T-cell (primary cell): ENCODE measurements at regions of chr12 and their contacts with region 1.

Region 1: DNA sequence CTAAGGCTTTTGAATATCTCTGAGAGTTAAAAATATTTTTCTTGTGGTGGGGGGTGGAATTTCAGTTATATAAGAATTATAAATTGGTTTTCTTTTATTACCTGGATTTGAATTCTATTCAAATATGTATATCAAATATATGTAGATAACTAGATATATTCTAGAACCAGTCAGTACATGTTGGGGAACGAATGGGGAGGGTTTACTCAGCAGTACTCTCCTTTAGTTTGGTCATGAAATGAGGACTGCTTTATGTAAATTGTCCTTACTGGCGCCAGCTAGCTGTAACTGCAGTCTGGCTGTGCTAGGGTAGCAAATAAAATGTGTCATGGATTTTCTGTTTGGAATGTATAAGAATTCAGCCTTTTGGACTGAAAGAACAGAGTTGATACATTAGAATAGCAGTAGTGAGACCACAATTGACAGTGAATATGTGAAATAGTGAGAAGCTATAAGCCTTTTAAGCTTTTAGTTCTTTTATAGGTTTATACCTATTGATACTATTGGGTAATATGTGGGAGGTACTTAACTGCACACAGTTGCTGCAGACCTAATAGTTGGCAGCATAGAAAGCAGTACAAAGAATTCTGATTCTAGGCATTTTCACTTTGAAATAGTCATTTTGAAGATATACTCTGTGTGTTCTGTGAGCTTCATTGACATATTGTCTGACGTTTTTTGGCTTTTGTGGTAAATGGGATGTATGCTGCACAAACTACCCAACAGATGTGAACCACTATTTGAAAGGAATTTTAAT is 29.0 kb downstream of the ATF7IP start:
- DNase-seq: peak in 21 of 35 experiments; percentile 13 to 81 (median 31)
- ATAC-seq: peak; percentile 65 to 81 (median 76)
- H3K4me3 ChIP-seq: peak overlapping the region in 1 of 2 donors; percentile 16
- H3K4me3 Mint-ChIP-seq: peak overlapping the region; percentile 58 to 82 (median 73)
- H3K27ac ChIP-seq: peak overlapping the region; percentile 73
- H3K27ac Mint-ChIP-seq: peak overlapping the region; percentile 92 to 96
- H3K4me1 ChIP-seq: peaks cover 32 to 47% of the 10 kb centered on the region in 2 experiments
- H3K4me1 Mint-ChIP-seq: peaks cover 86 to 91% (median 91%) of the 10 kb centered on the region in 3 donors
- H3K27me3 ChIP-seq: no peaks in the 10 kb centered on the region
- H3K27me3 Mint-ChIP-seq: no peaks in the 10 kb centered on the region

Region 2: GRCh38 chr12:14216405-14217294 is 177.8 kb before region 1 on chr12:
- CTCF ChIA-PET with region 1: no interaction called
- POLR2A ChIA-PET with region 1: no interaction called
- DNase-seq: peak in 1 of 35 experiments; percentile 42
- ATAC-seq: peak in 1 of 4 experiments; percentile 43
- H3K4me3 ChIP-seq: peak overlapping the region in 1 of 2 donors; percentile 50
- H3K4me3 Mint-ChIP-seq: peak overlapping the region; percentile 64 to 73 (median 66)
- H3K27ac ChIP-seq: peak overlapping the region; percentile 72
- H3K27ac Mint-ChIP-seq: peak overlapping the region; percentile 39 to 52
- H3K4me1 ChIP-seq: peaks cover 0 to 15% of the 10 kb centered on the region in 2 experiments
- H3K4me1 Mint-ChIP-seq: peaks cover 9 to 25% (median 19%) of the 10 kb centered on the region in 3 donors
- H3K27me3 ChIP-seq: no peaks in the 10 kb centered on the region
- H3K27me3 Mint-ChIP-seq: no peaks in the 10 kb centered on the region

Region 3: GRCh38 chr12:14257734-14258574 is 136.5 kb before region 1 on chr12:
- CTCF ChIA-PET with region 1: interaction called in 1 of 2 experiments, 12 read pairs
- POLR2A ChIA-PET with region 1: interaction called, 3 to 4 read pairs
- DNase-seq: peak in 34 of 35 experiments; percentile 52 to 86 (median 75)
- ATAC-seq: peak; percentile 48 to 67 (median 53)
- H3K4me3 ChIP-seq: peak overlapping the region in 1 of 2 donors; percentile 2
- H3K4me3 Mint-ChIP-seq: peak overlapping the region; percentile 60 to 71 (median 60)
- H3K27ac ChIP-seq: peak overlapping the region; percentile 95
- H3K27ac Mint-ChIP-seq: peak overlapping the region; percentile 98
- H3K4me1 ChIP-seq: peaks cover 13 to 43% of the 10 kb centered on the region in 2 experiments
- H3K4me1 Mint-ChIP-seq: peaks cover 57 to 58% (median 57%) of the 10 kb centered on the region in 3 donors
- H3K27me3 ChIP-seq: no peaks in the 10 kb centered on the region
- H3K27me3 Mint-ChIP-seq: no peaks in the 10 kb centered on the region

Region 4: GRCh38 chr12:14427929-14428328 is 33.4 kb after region 1 on chr12:
- CTCF ChIA-PET with region 1: no interaction called
- POLR2A ChIA-PET with region 1: no interaction called
- DNase-seq: no peak
- ATAC-seq: no peak
- H3K4me3 ChIP-seq: no peak overlapping the region
- H3K4me3 Mint-ChIP-seq: peak overlapping the region; percentile 18 to 49 (median 45)
- H3K27ac ChIP-seq: no peak overlapping the region
- H3K27ac Mint-ChIP-seq: peak overlapping the region in 1 of 2 donors; percentile 37
- H3K4me1 ChIP-seq: peaks cover 0 to 24% of the 10 kb centered on the region in 2 experiments
- H3K4me1 Mint-ChIP-seq: peaks cover 83 to 92% (median 84%) of the 10 kb centered on the region in 3 donors
- H3K27me3 ChIP-seq: no peaks in the 10 kb centered on the region
- H3K27me3 Mint-ChIP-seq: no peaks in the 10 kb centered on the region